ENCODE measurements at regions of chr1 and their contacts with region 1.

Region 1: GRCh38 chr1:220957233-220957605 is 78.0 kb downstream of the HLX start:
- DNase-seq: peak; percentile 98
- ATAC-seq: peak; percentile 87
- H3K4me3 ChIP-seq: no peak overlapping the region
- H3K27ac ChIP-seq: peak overlapping the region; percentile 1; the same call in 1 of the 2 replicates
- H3K4me1 ChIP-seq: peaks cover 4% of the 10 kb centered on the region
- H3K27me3 ChIP-seq: no peaks in the 10 kb centered on the region
- CTCF ChIP-seq: no peak
- POLR2A ChIP-seq: no peak
- RAD21 ChIP-seq: peak; percentile 22; the same call in 1 of the 2 replicates

Region 2: DNA sequence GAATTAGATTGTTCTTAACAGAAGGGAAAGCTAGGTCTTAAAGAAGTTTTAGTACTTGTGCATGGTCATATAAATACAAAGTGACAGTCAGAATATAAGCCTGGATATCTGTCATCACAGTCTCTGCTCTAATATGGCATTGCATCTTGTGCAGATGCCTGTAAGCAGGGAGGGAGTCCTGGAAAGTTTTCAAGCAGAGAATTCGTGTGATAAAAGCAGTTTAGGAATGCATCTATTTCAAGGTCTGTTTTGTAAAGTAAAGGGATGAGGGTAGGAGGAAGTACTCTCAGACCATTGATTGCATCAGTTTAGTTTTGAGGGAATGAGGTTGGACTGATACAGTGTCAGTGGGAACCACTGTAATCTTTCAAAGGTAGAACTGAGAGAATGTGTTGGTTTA is 832.7 kb before region 1 on chr1:
- CTCF ChIA-PET with region 1: no interaction called
- POLR2A ChIA-PET with region 1: no interaction called
- dilution Hi-C with region 1: no loop called
- in situ Hi-C with region 1: no loop called
- intact Hi-C with region 1: no loop called
- DNase-seq: peak; percentile 71
- ATAC-seq: peak; percentile 92
- H3K4me3 ChIP-seq: no peak overlapping the region
- H3K27ac ChIP-seq: peak overlapping the region; percentile 44; the same call in 1 of the 2 replicates
- H3K4me1 ChIP-seq: peaks cover 2% of the 10 kb centered on the region; the same call in 1 of the 2 replicates
- H3K27me3 ChIP-seq: no peaks in the 10 kb centered on the region
- CTCF ChIP-seq: no peak
- POLR2A ChIP-seq: no peak
- RAD21 ChIP-seq: no peak

Region 3: DNA sequence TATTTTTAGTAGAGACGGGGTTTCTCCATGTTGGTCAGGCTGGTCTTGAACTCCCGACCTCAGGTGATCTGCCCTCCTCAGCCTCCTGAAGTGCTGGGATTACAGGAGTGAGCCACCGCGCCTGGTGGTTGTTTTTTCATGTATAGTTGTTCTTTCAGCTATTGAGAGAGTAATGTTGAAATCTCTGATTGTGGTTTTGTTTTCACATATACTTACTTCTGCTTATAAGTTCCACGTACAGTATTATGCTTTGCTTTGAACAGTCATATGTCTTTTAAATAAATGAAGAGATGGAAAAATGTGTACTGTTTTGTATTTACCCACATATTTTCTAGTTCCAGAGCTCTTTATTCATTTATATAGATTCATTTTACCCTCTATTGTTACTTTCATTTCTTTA is 384.8 kb before region 1 on chr1:
- CTCF ChIA-PET with region 1: no interaction called
- POLR2A ChIA-PET with region 1: no interaction called
- dilution Hi-C with region 1: no loop called
- in situ Hi-C with region 1: no loop called
- intact Hi-C with region 1: no loop called
- DNase-seq: no peak
- ATAC-seq: no peak
- H3K4me3 ChIP-seq: no peak overlapping the region
- H3K27ac ChIP-seq: no peak overlapping the region
- H3K4me1 ChIP-seq: no peaks in the 10 kb centered on the region
- H3K27me3 ChIP-seq: no peaks in the 10 kb centered on the region
- CTCF ChIP-seq: no peak
- POLR2A ChIP-seq: no peak
- RAD21 ChIP-seq: no peak

Region 4: GRCh38 chr1:220990427-220991339 is 33.5 kb after region 1 on chr1:
- CTCF ChIA-PET with region 1: no interaction called
- POLR2A ChIA-PET with region 1: no interaction called
- dilution Hi-C with region 1: no loop called
- in situ Hi-C with region 1: no loop called
- intact Hi-C with region 1: no loop called
- DNase-seq: peak; percentile 83
- ATAC-seq: peak; percentile 88
- H3K4me3 ChIP-seq: no peak overlapping the region
- H3K27ac ChIP-seq: no peak overlapping the region
- H3K4me1 ChIP-seq: peaks cover 2% of the 10 kb centered on the region
- H3K27me3 ChIP-seq: no peaks in the 10 kb centered on the region
- CTCF ChIP-seq: peak; percentile 38
- POLR2A ChIP-seq: no peak
- RAD21 ChIP-seq: peak; percentile 43

Region 5: GRCh38 chr1:221105578-221105977 is 148.4 kb after region 1 on chr1:
- CTCF ChIA-PET with region 1: no interaction called
- POLR2A ChIA-PET with region 1: interaction called, 13 read pairs
- dilution Hi-C with region 1: no loop called
- in situ Hi-C with region 1: no loop called
- intact Hi-C with region 1: no loop called
- DNase-seq: no peak
- ATAC-seq: no peak
- H3K4me3 ChIP-seq: no peak overlapping the region
- H3K27ac ChIP-seq: no peak overlapping the region
- H3K4me1 ChIP-seq: peaks cover 3% of the 10 kb centered on the region
- H3K27me3 ChIP-seq: no peaks in the 10 kb centered on the region
- CTCF ChIP-seq: no peak
- POLR2A ChIP-seq: no peak
- RAD21 ChIP-seq: no peak